CD8-positive, alpha-beta T cell (primary cell): ENCODE measurements at regions of chr6 and their contacts with region 1.

Region 1: GRCh38 chr6:8983188-8983688 is 547.9 kb upstream of the SLC35B3 start:
- DNase-seq: peak in 8 of 9 experiments; percentile 20 to 64 (median 38)
- ATAC-seq: peak; percentile 56
- H3K4me3 ChIP-seq: no peak overlapping the region
- H3K4me3 Mint-ChIP-seq: no peak overlapping the region
- H3K27ac ChIP-seq: no peak overlapping the region
- H3K27ac Mint-ChIP-seq: no peak overlapping the region
- H3K4me1 ChIP-seq: no peaks in the 10 kb centered on the region
- H3K4me1 Mint-ChIP-seq: no peaks in the 10 kb centered on the region
- H3K27me3 ChIP-seq: no peaks in the 10 kb centered on the region
- H3K27me3 Mint-ChIP-seq: peaks cover 11% of the 10 kb centered on the region
- CTCF ChIP-seq: peak; percentile 99

Region 2: DNA sequence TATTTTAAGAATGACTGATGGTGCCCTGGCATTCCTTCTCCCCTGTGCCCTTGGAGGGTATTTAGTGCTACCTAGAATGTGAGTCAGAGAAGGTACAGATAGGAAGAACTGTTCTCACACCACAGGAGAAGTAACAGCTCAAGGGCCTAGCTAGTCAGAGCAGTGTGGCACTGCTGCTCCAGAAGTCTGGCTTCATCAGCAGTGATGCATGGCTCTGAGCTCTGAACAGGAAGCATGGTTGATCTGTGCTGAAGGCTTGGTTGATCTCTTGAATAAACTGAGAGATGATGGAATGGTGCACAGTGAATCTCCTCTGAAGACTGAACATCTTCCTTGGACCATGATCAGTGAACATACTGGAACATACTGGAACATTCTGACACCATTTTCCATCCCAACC is 122.6 kb before region 1 on chr6:
- CTCF ChIA-PET with region 1: no interaction called
- POLR2A ChIA-PET with region 1: no interaction called
- intact Hi-C with region 1: no loop called
- DNase-seq: no peak
- ATAC-seq: no peak
- H3K4me3 ChIP-seq: no peak overlapping the region
- H3K4me3 Mint-ChIP-seq: no peak overlapping the region
- H3K27ac ChIP-seq: no peak overlapping the region
- H3K27ac Mint-ChIP-seq: no peak overlapping the region
- H3K4me1 ChIP-seq: no peaks in the 10 kb centered on the region
- H3K4me1 Mint-ChIP-seq: no peaks in the 10 kb centered on the region
- H3K27me3 ChIP-seq: no peaks in the 10 kb centered on the region
- H3K27me3 Mint-ChIP-seq: no peaks in the 10 kb centered on the region
- CTCF ChIP-seq: no peak

Region 3: GRCh38 chr6:9121549-9121948 is 138.3 kb after region 1 on chr6:
- CTCF ChIA-PET with region 1: no interaction called
- POLR2A ChIA-PET with region 1: no interaction called
- intact Hi-C with region 1: no loop called
- DNase-seq: no peak
- ATAC-seq: no peak
- H3K4me3 ChIP-seq: no peak overlapping the region
- H3K4me3 Mint-ChIP-seq: no peak overlapping the region
- H3K27ac ChIP-seq: no peak overlapping the region
- H3K27ac Mint-ChIP-seq: no peak overlapping the region
- H3K4me1 ChIP-seq: no peaks in the 10 kb centered on the region
- H3K4me1 Mint-ChIP-seq: no peaks in the 10 kb centered on the region
- H3K27me3 ChIP-seq: no peaks in the 10 kb centered on the region
- H3K27me3 Mint-ChIP-seq: no peaks in the 10 kb centered on the region
- CTCF ChIP-seq: no peak

Region 4: GRCh38 chr6:10434692-10435376 is 1451.6 kb after region 1 on chr6:
- CTCF ChIA-PET with region 1: no interaction called
- POLR2A ChIA-PET with region 1: no interaction called
- intact Hi-C with region 1: loop called (anchors 1 kb)
- DNase-seq: peak in 2 of 9 experiments; percentile 31 to 53
- ATAC-seq: no peak
- H3K4me3 ChIP-seq: no peak overlapping the region
- H3K4me3 Mint-ChIP-seq: no peak overlapping the region
- H3K27ac ChIP-seq: no peak overlapping the region
- H3K27ac Mint-ChIP-seq: no peak overlapping the region
- H3K4me1 ChIP-seq: no peaks in the 10 kb centered on the region
- H3K4me1 Mint-ChIP-seq: peaks cover 2% of the 10 kb centered on the region
- H3K27me3 ChIP-seq: peaks cover 0 to under 1% of the 10 kb centered on the region in 2 experiments
- H3K27me3 Mint-ChIP-seq: peaks cover 20% of the 10 kb centered on the region
- CTCF ChIP-seq: peak; percentile 79